HEK293 (cell line): ENCODE measurements at regions of chr5 and their contacts with region 1.

Region 1: DNA sequence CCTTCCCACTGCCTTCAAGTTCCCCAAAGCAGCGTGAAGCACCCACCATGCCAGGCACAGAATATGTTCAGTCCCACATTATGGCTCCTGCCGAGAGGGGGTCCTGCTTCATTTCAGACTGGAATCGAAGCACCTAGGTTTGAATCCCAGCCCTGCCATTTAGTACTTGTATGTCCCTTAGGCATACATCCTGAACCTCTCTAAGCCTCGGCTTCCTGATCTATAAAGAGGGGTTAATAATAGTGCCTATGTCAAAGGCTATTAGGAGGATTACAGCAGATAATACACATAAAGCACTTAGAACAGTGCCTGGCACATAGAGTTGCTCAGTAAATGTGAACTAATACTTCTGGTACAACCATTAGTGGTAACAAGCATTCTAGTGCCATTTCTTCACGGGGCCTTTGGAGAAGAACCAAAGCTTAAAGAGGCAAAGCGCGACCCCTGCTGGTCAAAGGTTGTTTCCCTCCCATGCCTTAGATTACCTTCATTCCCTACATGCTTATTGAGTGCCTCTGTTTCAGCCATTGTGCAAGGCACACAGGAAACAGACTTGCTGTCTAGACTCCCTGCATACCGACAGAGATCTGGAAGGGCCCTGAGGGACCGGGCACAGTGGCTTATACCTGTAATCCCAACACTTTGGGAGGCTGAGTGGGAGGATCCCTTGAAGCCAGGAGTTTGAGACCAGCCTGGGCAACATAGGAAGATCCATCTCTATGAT is 98.2 kb downstream of the PPARGC1B start:
- H3K4me3 ChIP-seq: no peak overlapping the region
- H3K27ac ChIP-seq: no peak overlapping the region
- H3K4me1 ChIP-seq: no peaks in the 10 kb centered on the region
- CTCF ChIP-seq: peak; percentile 65

Region 2: DNA sequence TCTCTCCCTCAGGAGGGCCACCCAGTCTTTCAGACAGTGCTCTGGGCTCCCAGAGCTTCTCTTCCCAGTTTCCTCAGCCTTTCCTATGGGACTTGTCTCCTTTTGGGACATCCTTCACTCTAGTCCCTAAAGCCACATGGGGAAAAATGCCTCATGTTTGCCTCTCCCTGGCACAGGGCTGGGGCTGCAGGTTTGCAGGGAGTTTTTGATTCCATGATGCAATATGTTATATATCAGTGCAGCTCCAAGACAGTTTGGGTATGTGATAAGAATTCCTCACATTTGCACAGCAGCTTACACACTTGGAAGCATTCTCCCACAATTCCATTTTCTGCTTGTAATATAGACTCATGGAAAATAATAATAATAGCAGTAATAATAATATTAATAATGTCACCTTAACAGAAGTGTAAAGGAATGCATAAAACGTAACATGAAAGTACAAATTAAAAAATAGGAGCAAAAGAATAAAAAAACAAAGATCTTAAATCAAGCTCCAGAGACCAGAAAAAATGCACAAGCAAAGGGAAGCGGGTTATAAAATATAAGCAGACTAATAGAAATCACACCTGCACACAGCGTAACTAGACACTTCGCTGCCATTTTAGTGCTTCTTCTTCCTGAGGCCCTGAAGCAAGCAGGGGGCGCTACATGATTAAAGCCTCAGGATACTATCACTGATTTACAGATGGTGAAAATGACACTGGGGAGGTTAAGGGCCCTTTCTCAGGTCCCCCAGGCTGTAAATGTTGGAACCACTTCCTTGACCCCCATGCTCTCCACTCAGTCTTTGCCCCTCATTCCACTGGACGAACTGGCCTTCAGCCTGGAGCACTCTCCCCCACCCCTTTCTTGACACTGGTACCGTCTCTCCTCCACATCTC is 379.2 kb before region 1 on chr5:
- CTCF ChIA-PET with region 1: no interaction called
- POLR2A ChIA-PET with region 1: no interaction called
- H3K4me3 ChIP-seq: no peak overlapping the region
- H3K27ac ChIP-seq: no peak overlapping the region
- H3K4me1 ChIP-seq: no peaks in the 10 kb centered on the region
- CTCF ChIP-seq: no peak

Region 3: GRCh38 chr5:149636851-149637246 is 191.5 kb before region 1 on chr5:
- CTCF ChIA-PET with region 1: interaction called, 263 read pairs
- POLR2A ChIA-PET with region 1: interaction called, 3 read pairs
- H3K4me3 ChIP-seq: no peak overlapping the region
- H3K27ac ChIP-seq: no peak overlapping the region
- H3K4me1 ChIP-seq: no peaks in the 10 kb centered on the region
- CTCF ChIP-seq: peak; percentile 95

Region 4: DNA sequence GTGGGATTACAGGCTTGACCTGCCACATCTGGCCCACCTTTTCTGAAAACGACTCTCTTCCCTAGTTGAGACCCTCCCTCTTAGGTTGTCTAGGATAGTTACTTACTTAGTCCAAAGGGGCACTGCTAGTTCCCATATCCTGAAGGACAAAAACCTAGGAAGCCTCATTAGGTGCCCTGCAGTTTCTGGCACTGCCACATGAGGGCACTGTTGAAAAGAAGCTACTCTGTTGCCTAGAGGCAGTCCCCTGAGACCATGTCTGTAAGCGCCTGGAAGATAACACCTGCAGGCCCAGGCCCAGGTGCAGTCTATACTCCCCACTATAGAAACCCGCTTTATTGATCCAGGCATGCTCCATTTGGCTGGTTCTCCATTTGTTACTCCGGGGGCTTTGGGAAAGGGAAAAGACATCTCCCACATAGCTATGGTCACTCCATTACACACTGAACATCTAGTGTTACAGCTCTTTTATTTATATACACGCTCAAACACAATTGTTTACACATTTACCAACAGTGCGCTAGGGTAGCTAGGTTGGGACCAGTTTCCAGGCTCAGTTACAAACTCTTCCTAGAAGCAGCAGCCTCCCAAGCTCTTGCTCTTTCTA is 171.6 kb before region 1 on chr5:
- CTCF ChIA-PET with region 1: interaction called, 23 read pairs
- POLR2A ChIA-PET with region 1: no interaction called
- H3K4me3 ChIP-seq: no peak overlapping the region
- H3K27ac ChIP-seq: no peak overlapping the region
- H3K4me1 ChIP-seq: no peaks in the 10 kb centered on the region
- CTCF ChIP-seq: peak; percentile 40